ENCODE measurements at regions of chr12 and their contacts with region 1.

Region 1: DNA sequence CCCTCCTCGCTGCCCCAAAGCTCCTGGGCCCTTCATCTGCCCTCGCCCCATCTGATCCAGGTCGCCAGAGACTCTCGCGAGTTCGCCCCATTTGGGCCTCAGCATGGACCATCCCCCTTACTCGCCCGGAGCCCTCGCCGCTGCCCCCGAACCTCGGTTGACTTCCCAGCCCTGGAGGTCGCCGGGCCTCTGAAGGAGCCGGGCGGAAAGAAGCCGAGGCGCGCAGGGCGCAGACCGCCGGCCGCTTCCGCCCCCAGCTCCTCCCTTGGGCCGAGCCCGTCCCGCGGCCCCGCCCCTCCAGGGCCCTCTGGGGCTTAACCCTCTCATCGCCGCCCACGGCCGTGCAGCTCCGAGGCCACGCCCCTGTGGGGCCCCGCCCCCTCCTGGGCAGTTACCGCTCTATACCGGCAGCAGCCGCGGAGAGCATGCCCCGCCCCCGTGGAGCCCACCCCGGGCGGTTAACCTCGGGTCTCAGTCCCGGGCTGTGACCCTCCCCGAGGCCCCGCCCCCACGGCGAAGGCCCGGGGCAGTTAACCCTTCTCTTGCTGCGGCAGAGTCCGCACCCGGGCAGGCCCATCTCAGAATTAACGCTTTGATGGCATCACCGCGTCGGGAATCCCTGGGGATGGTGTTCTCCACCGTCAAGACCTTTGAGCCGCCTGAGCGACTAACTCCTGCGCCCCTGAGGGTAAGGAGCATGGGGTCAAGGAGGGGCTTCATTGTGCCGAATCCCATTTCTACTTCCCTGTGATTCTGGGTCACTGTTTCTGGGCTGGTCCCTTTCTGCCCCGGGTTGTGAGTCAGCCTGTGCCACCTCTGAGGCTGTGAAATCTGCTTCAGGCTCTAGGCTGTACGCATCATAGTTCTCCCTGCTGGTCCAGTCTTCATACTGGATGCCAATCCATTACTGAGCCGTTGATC is at the start of gene SPSB2:
- DNase-seq: peak; percentile 99
- H3K4me3 Mint-ChIP-seq: peak within 1 kb of the TSS; percentile 92
- H3K27ac Mint-ChIP-seq: peak within 1 kb of the TSS; percentile 84
- H3K4me1 Mint-ChIP-seq: peaks cover 52% of the 10 kb centered on the region
- H3K27me3 Mint-ChIP-seq: no peaks in the 10 kb centered on the region
- total RNA-seq, gene SPSB2: 3.7 and 4.1 TPM in 2 replicates

Region 2: DNA sequence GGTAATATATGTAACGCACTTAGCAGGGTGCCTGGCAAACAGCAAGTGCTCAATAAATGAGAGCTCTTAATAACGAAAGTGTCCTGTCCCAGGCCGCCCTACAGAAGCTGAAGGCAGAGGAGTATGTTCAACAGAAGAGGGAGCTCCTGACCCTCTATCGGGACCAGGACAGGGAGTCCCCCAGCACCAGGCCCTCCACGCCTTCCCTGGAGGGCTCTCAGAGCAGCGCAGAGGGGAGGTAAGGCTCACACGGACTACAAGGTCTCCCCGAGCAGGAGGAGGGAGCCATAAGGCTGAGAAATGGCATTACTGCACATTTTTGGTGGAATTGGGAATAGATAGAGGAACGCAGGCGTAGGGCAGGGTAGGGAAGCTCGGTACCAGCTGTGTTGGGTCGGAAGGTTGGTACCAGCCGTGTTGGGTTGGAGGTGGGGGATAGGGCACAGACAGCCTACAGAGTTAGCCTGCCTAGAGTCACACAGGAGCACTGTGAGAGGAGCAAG is 547.0 kb before region 1 on chr12:
- intact Hi-C with region 1: no loop called
- DNase-seq: no peak
- H3K4me3 Mint-ChIP-seq: no peak overlapping the region
- H3K27ac Mint-ChIP-seq: no peak overlapping the region
- H3K4me1 Mint-ChIP-seq: peaks cover 15% of the 10 kb centered on the region
- H3K27me3 Mint-ChIP-seq: no peaks in the 10 kb centered on the region

Region 3: GRCh38 chr12:6399884-6400644 is 473.3 kb before region 1 on chr12:
- intact Hi-C with region 1: no loop called
- DNase-seq: no peak
- H3K4me3 Mint-ChIP-seq: no peak overlapping the region
- H3K27ac Mint-ChIP-seq: no peak overlapping the region
- H3K4me1 Mint-ChIP-seq: no peaks in the 10 kb centered on the region
- H3K27me3 Mint-ChIP-seq: peaks cover 10% of the 10 kb centered on the region

Region 4: GRCh38 chr12:6592087-6592486 is 281.3 kb before region 1 on chr12:
- intact Hi-C with region 1: no loop called
- DNase-seq: no peak
- H3K4me3 Mint-ChIP-seq: no peak overlapping the region
- H3K27ac Mint-ChIP-seq: peak overlapping the region; percentile 33
- H3K4me1 Mint-ChIP-seq: peaks cover 6% of the 10 kb centered on the region
- H3K27me3 Mint-ChIP-seq: no peaks in the 10 kb centered on the region

Region 5: DNA sequence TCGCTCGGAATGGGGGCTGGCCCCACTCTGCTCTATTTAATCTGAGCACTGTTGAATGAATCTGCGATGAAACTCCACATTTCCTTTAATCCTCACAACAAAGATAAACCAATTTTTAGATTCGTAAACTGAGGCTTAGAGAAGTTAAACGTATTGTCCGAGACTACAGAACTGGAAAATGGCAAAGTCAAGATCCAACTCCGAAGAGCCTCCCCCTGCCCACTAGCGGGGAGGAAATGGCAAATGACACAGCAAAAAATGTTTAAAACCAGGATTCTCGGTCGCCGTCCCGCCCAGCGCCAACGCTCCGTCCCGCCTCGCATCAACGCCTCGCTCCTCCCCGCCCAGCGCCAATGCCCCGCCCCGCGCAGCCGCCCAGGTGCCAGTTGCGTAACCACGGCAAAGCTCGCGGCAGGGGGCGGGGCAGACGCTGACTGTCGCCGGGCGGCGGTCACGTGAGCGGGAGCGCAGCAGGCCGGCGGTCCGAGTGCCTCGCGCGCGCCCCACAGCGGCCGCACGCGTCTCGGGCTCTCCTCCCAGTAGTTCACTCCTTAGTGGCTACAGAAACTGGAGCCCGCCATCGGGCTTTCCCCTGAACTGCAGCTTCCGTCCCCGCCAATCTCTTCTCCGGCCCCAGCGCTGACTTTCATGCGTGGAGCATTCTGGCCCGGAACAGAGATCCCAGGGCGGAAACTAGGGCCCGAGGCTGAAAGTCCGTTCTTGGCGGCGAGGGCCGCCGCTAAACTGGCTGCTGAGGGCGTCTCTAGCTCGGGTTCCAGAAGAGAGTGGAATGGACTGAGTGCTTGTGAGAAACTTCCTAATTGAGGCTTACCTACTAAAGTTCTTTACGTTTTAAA is 17.7 kb after region 1 on chr12:
- intact Hi-C with region 1: loop called (anchors 1 kb)
- DNase-seq: peak; percentile 98
- H3K4me3 Mint-ChIP-seq: peak overlapping the region; percentile 80
- H3K27ac Mint-ChIP-seq: peak overlapping the region; percentile 92
- H3K4me1 Mint-ChIP-seq: peaks cover 13% of the 10 kb centered on the region
- H3K27me3 Mint-ChIP-seq: no peaks in the 10 kb centered on the region

Region 6: GRCh38 chr12:6904280-6905278 is 31.2 kb after region 1 on chr12 and contains the start of gene LRRC23:
- intact Hi-C with region 1: loop called (anchors 1 kb)
- DNase-seq: peak; percentile 97
- H3K4me3 Mint-ChIP-seq: no peak within 1 kb of the TSS
- H3K27ac Mint-ChIP-seq: no peak within 1 kb of the TSS
- H3K4me1 Mint-ChIP-seq: peaks cover 6% of the 10 kb centered on the region
- H3K27me3 Mint-ChIP-seq: no peaks in the 10 kb centered on the region
- total RNA-seq, gene LRRC23: 4.7 and 6.6 TPM in 2 replicates

Region 7: GRCh38 chr12:6914246-6914946 is 41.0 kb after region 1 on chr12 and contains the start of gene ENO2:
- intact Hi-C with region 1: loop called (anchors 2 kb)
- DNase-seq: peak; percentile 74
- H3K4me3 Mint-ChIP-seq: peak within 1 kb of the TSS; percentile 93
- H3K27ac Mint-ChIP-seq: peak within 1 kb of the TSS; percentile 77
- H3K4me1 Mint-ChIP-seq: peaks cover 21% of the 10 kb centered on the region
- H3K27me3 Mint-ChIP-seq: no peaks in the 10 kb centered on the region
- total RNA-seq, gene ENO2: 230 and 235 TPM in 2 replicates

Region 8: DNA sequence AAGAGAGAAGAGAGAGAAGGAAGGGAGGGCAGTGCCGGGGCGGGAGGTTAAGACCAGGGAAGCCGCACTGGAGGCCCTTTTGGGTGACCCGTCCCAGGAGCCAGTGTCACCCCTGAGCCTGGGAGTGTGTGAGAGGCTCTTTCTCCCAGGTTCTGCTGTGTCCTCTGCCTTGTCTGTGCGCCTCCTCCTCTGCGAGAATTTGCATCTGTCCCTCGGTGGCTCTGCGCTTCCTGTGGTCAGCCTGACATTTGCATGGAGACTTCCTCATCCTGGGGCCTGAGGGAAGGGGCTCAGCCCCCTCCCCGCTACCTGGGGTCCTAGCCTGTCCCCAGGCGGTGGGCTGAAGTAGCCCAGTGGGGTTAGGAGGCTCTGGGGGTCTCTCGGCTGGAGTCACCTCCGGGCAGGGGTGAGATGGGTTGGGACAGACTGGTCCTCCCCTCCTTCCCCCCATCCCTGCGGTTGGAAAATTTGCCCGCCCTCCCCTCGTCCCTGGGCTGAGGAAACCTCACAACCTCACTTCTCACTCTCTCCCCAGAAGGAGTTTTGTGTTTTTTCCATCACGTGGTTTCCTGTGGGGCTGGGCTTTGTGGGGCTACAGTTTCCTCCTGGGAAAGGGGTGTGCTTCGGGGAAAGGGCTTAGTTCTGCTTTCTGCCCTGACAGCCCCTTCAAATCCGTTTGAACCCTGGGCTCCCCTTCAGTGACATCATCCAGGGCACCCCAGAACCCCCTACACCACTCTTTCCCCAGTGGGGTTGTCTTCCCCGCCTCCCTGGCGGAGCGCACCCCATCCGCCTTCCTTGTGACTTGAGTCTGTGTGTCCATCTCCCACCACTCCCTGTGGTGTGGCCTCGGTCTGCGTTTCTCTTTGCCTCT is 80.3 kb after region 1 on chr12:
- intact Hi-C with region 1: loop called (anchors 2 kb)
- DNase-seq: peak; percentile 79
- H3K4me3 Mint-ChIP-seq: peak overlapping the region; percentile 94
- H3K27ac Mint-ChIP-seq: peak overlapping the region; percentile 97
- H3K4me1 Mint-ChIP-seq: peaks cover 74% of the 10 kb centered on the region
- H3K27me3 Mint-ChIP-seq: no peaks in the 10 kb centered on the region

Measured in activated T-helper 2 cell treated with anti-CD3 and anti-CD28 coated beads, Interferon-gamma antibody, Interleukin-2, Interleukin-4, amounts not matched to agents 10 μg/mL and 5 μg/mL and 100 μg/mL, durations not matched to agents 14 hours and 24 hours and 36 hours (primary cell).